Cardiac septum (tissue), 1 donor: ENCODE measurements at regions of chr9 and their contacts with region 1.

Region 1: DNA sequence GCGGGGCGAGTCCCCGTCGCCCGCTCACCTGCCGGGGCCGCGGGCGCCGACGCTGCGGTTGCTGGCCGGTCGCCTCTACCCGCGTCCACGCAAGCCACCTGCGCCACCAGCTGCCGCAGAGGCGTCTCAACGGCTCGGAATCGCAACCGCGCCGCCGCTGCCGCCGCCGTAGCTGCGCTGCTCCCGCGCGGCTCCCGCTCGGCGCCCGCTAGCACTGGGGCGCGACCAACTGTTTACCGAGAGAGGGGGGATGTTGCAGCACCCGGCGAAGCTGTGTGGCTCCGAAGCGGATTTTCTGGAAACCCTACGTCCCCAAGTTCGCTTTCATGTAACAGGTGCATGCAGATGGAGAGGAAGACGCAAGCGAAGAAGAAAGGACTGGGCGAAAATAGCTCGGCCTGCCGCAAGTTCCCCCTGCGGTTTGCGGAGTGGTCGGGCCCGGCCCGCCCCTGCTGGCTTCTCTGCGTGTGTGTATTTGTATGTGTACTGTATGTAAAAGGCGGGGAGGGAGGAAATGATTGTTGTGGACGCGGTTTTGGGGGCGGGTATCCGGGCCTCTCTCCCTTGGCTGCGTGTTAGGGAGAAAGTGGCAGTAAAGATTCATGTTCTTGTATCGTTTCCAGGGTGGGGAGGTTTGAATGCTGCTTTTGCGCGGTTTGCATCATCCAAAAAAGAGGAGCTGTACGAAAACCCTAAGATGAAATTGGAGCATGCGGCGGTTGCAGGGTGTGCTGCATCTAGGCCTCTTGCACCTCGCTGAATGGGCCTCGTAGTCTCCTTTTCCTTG is at the start of gene PSIP1:
- DNase-seq: peak; percentile 91
- total RNA-seq, gene PSIP1: 21.2 TPM

Region 2: GRCh38 chr9:15422372-15423230 is 88.4 kb before region 1 on chr9 and contains the start of gene SNAPC3:
- intact Hi-C with region 1: loop called (anchors 5 kb)
- DNase-seq: peak; percentile 98
- total RNA-seq, gene SNAPC3: 31.5 TPM

Region 3: DNA sequence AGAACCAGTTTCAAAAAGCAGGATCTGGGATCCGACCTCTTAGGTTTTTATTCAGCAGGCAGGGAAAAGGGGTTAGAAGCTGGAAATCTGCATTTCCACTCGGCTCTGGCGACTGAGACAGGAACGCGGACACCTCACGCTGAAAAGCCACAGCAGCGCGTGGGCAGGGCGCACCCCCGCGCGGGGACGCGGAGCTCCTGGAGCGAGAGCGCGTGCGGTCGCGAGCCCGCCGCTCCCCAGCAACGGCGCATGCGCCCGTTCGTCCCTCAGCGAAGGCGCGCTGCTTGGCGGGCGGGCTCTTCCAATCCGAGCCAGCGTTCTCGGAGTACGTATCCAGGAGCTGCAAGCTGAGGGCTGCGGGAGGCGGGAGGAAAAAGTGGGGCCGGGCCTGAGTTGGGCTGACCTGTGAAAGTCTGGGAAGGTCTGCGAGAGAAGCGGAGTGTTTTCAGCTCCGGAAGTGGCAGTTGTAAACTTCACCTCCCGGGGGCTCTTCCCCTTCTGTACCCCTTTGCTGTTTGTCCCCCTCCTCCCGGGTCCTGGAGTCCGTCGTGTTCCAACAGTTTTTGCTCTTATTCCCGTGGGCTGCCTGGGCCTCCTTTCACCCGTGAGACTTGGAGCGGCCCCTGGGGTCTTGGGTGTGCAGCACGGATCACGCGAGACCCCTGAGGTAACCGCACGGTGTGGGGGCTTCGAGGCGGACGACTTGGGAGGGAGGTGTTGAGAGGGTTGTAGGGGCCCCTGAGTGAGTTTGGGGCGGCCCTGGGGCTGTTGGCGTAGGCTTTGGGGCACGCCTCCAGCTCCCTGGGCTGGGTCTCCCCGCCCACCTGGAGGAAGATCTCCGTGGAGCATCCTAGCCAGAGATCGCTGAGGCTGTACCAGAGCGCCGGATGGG is 41.9 kb after region 1 on chr9 and contains the start of gene CCDC171:
- intact Hi-C with region 1: loop called (anchors 1 kb)
- DNase-seq: peak; percentile 95
- total RNA-seq, gene CCDC171: 2.5 TPM